ENCODE measurements at regions of chr10 and their contacts with region 1.

Region 1: GRCh38 chr10:121974535-121975294 is at the start of gene NSMCE4A:
- H3K4me3 Mint-ChIP-seq: peak within 1 kb of the TSS; percentile 83
- H3K27ac Mint-ChIP-seq: peak within 1 kb of the TSS; percentile 76
- H3K4me1 Mint-ChIP-seq: peaks cover 24% of the 10 kb centered on the region
- H3K27me3 Mint-ChIP-seq: no peaks in the 10 kb centered on the region

Region 2: GRCh38 chr10:121426307-121426706 is 548.4 kb before region 1 on chr10:
- intact Hi-C with region 1: no loop called
- H3K4me3 Mint-ChIP-seq: no peak overlapping the region
- H3K27ac Mint-ChIP-seq: no peak overlapping the region
- H3K4me1 Mint-ChIP-seq: no peaks in the 10 kb centered on the region
- H3K27me3 Mint-ChIP-seq: no peaks in the 10 kb centered on the region

Region 3: DNA sequence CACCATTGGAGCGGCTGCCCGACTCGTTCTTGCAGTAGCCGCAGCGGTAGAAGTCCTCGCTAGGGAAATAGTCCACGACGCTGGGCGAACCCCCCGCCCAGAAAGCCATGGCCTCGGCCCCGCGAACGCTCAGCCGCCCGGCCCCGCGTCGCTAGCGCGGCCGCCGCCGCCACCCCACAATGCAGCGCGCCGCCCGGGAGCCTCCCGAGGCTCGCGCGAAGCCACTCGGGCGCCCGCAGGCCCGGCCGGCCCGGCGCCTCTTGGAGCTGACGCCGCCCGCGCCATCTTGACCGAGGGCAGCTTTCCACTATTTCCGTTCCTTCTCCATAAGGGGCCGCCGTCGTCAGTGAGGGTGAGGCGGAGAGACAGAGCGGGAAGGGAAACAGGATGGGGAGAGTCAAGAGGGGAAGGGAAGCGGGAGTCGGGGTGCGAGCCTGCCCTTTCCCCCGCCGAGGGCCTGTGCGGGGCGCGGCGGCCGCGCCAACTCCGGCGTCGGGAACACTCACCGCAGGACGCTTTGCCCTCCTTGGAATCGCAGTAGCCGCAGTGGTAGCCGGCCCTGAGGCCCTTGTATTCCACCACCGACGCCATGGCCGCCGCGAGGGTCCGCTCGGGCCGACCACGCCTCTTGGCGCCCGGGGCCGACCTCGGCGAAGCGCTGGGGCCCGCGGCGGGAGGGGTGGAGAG is 46.7 kb before region 1 on chr10 and contains the start of gene ATE1:
- intact Hi-C with region 1: loop called (anchors 1 kb)
- H3K4me3 Mint-ChIP-seq: peak within 1 kb of the TSS; percentile 98
- H3K27ac Mint-ChIP-seq: peak within 1 kb of the TSS; percentile 94
- H3K4me1 Mint-ChIP-seq: peaks cover 31% of the 10 kb centered on the region
- H3K27me3 Mint-ChIP-seq: no peaks in the 10 kb centered on the region

Measured in dendritic cell treated with granulocyte-macrophage colony-stimulating factor and Interleukin-4, amounts not matched to agents 40 ng/mL and 50 ng/mL, for 4 days (primary cell).